ENCODE measurements at regions of chr15 and their contacts with region 1.

Region 1: GRCh38 chr15:62306851-62307504 is 141.9 kb upstream of the C2CD4B start:
- DNase-seq: peak; percentile 75
- H3K4me3 Mint-ChIP-seq: no peak overlapping the region
- H3K27ac Mint-ChIP-seq: no peak overlapping the region
- H3K4me1 Mint-ChIP-seq: peaks cover 11% of the 10 kb centered on the region
- H3K27me3 Mint-ChIP-seq: no peaks in the 10 kb centered on the region
- CTCF ChIP-seq: peak; percentile 79

Region 2: DNA sequence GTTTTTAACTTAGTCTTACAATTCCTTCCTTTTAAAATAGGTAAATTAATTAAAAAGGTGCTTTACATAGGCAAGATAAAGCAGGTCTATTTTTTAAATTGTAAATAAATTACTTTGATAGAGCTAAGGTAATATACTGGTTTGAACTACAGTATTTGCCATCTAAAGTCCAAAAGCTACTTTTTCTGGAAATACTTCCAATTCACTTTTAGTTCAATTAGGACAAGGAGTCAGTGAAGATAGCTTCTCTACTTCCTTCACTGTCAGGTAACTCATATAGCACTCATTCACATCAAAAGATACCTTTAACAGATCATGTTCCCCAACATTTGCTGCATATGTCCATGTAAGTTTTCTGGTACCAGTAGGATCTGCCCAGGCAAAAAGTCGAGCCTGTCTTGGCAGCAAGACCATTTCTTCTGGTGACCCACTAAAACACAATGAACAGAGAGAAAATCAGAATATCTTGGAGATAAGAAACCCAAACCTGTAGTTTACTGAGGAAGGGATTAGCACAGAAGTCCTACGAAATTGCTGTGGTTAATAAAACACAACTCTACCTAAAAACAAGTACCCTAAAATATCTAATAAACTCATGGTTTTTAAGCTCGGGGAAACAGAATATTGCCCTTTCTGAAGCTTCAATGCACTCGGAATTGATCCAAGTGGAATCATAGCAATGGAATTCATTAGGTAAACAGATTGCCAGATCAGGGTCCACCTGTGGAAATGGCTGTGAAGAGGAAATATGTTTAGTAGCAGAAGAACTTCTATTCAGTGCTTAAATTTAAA is 399.8 kb before region 1 on chr15:
- CTCF ChIA-PET with region 1: interaction called, 10 read pairs
- POLR2A ChIA-PET with region 1: interaction called, 4 read pairs
- intact Hi-C with region 1: no loop called
- DNase-seq: peak; percentile 11
- H3K4me3 Mint-ChIP-seq: no peak overlapping the region
- H3K27ac Mint-ChIP-seq: peak overlapping the region; percentile 46
- H3K4me1 Mint-ChIP-seq: peaks cover 8% of the 10 kb centered on the region
- H3K27me3 Mint-ChIP-seq: no peaks in the 10 kb centered on the region
- CTCF ChIP-seq: no peak

Region 3: GRCh38 chr15:62071711-62072308 is 235.2 kb before region 1 on chr15:
- CTCF ChIA-PET with region 1: interaction called, 46 read pairs
- POLR2A ChIA-PET with region 1: no interaction called
- intact Hi-C with region 1: loop called (anchors 2 kb)
- DNase-seq: peak; percentile 44
- H3K4me3 Mint-ChIP-seq: no peak overlapping the region
- H3K27ac Mint-ChIP-seq: no peak overlapping the region
- H3K4me1 Mint-ChIP-seq: peaks cover 8% of the 10 kb centered on the region
- H3K27me3 Mint-ChIP-seq: peaks cover 9% of the 10 kb centered on the region
- CTCF ChIP-seq: peak; percentile 57

Region 4: DNA sequence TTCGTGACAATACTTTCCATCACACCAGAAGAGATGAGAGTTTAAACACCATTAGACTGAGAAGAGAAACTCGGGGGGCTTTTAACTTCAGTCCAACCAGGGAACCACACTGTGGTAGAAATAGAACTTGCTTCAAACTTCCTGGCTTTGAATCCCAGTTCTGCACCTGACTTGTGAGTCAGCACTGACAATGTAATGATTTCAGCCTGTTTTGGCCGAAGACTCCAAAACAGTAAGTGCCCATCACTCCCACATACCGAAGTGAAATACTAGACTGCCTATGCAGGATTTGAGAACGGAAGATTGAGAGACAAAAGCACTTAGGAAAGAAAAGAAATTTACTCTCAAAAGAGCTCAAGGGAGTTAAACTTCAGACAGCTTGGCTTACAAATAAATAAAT is 168.9 kb before region 1 on chr15:
- CTCF ChIA-PET with region 1: interaction called, 14 read pairs
- POLR2A ChIA-PET with region 1: no interaction called
- intact Hi-C with region 1: no loop called
- DNase-seq: peak; percentile 86
- H3K4me3 Mint-ChIP-seq: no peak overlapping the region
- H3K27ac Mint-ChIP-seq: peak overlapping the region; percentile 43
- H3K4me1 Mint-ChIP-seq: peaks cover 52% of the 10 kb centered on the region
- H3K27me3 Mint-ChIP-seq: no peaks in the 10 kb centered on the region
- CTCF ChIP-seq: no peak

Region 5: DNA sequence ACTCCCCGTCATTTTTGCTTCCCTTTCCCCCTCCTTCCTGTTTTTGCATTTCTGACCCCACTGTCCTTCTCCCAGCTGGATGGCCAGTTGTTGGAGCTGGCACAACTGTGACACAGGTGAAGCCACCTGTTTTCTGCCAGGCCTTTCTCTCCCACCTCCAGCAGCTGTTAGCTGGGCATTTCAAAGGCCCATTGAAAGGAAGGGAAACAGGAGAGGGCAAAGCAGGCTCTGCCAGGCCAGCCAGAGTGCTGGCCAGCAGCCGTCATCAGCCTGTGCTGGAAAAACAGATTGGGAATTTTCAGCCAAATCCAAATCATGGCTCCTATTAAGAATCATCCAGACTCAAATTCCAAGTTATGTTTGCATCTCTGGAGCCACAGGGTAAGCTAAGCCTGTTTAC is 13.3 kb after region 1 on chr15:
- CTCF ChIA-PET with region 1: interaction called, 10 read pairs
- POLR2A ChIA-PET with region 1: interaction called, 5 read pairs
- intact Hi-C with region 1: no loop called
- DNase-seq: no peak
- H3K4me3 Mint-ChIP-seq: no peak overlapping the region
- H3K27ac Mint-ChIP-seq: no peak overlapping the region
- H3K4me1 Mint-ChIP-seq: no peaks in the 10 kb centered on the region
- H3K27me3 Mint-ChIP-seq: peaks cover 18% of the 10 kb centered on the region
- CTCF ChIP-seq: no peak

Region 6: DNA sequence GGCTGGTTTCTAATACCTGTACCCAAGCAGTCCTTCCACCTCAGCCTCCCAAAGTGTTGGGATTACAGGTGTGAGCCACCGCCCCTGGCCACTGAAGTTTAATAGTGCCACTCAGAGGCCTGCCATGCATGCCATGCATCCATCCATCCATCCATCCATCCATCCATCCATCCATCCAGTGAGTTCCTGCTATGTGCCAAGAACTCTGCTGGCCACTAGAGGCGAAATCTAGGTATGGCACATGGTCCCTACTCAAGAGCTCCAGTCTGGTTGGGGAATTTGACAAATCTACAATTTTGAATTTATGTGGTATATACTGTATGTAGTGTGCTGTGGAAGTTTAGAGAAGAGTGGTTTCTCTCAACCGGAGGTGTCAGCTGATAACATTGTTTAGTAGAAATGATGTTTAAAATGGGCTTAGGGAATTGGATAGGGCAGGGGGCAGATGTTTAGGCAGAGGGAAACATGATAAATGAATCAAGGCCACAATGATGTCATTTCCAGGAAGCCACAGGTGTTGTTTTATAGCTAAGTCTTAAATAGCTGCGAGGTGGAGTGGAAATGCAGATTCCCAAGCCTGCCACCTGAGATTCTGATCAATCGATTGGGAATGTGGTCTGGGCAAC is 242.5 kb after region 1 on chr15:
- CTCF ChIA-PET with region 1: no interaction called
- POLR2A ChIA-PET with region 1: no interaction called
- intact Hi-C with region 1: loop called (anchors 1 kb)
- DNase-seq: peak; percentile 59
- H3K4me3 Mint-ChIP-seq: no peak overlapping the region
- H3K27ac Mint-ChIP-seq: no peak overlapping the region
- H3K4me1 Mint-ChIP-seq: peaks cover 13% of the 10 kb centered on the region
- H3K27me3 Mint-ChIP-seq: no peaks in the 10 kb centered on the region
- CTCF ChIP-seq: peak; percentile 54

Region 7: DNA sequence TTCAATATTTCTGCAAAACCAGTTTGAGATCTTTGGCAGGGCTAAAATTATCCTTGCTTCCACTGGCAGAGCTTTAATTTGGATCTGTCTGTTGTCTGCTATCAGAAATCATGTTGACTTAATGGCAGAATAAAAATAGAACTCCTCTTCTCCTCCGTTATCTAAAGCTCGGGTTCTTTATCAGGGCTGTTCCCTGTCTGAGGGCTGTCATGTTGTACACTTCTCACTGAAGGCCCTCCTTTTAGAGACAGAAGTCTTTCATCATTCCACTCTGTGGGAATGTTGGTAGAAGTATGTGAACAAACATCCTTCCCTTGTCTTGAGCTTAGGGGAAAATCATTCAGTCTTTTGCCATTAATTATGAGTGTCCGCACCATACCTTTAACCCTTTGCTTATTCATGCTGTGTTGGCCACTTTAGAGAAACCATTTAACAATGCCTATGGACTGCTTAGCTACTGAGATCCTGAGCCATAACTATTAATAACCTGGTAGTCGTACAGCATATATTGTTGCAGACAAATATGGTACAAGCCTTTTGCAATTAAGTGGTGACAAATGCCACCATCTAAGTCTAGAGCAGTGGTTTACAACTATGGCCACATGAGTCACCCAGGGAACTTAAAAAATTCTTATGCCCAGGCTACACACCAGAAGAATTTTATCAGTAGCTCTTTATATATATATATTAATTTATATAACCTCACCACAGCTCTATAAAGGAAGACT is 509.5 kb after region 1 on chr15:
- CTCF ChIA-PET with region 1: no interaction called
- POLR2A ChIA-PET with region 1: no interaction called
- intact Hi-C with region 1: no loop called
- DNase-seq: no peak
- H3K4me3 Mint-ChIP-seq: no peak overlapping the region
- H3K27ac Mint-ChIP-seq: no peak overlapping the region
- H3K4me1 Mint-ChIP-seq: peaks cover 10% of the 10 kb centered on the region
- H3K27me3 Mint-ChIP-seq: no peaks in the 10 kb centered on the region
- CTCF ChIP-seq: no peak

Measured in MCF 10A (cell line).